ENCODE measurements at regions of chr2 and their contacts with region 1.

Region 1: DNA sequence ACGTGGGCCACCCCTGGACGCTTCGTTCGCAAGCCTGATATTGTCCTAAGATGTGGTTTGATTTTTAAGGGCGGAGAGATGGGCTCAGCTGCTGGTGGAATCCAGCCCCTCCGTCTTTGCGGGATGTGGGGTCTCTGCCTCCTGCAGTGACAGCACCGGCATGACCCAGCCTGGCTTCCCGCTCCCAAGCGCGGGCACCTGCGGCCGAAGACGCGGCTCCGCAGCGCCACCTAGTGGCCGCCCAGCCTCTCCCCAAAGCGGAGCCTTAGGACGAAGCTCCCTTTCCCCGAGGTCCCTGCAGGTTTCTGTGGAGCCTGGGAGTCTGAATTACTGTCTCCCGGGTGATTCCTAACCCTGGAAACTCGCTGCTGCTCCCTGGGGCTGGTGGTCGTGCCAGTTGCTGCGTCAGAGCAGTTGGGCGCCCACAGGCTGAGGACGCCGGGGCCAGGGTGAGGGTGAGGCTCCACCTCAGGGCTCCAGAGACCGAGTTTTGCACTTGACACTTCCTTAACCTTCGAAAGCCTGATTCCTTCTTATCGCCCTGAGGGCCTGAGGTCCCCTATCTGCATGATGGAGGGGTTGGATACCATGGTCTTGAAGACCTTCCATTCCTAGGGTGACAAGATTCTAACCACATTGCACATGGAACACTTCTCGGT is 137.5 kb downstream of the TPO start:
- DNase-seq: no peak
- ATAC-seq: peak; percentile 87
- H3K4me3 ChIP-seq: no peak overlapping the region
- H3K27ac ChIP-seq: peak overlapping the region; percentile 83
- H3K4me1 ChIP-seq: peaks cover 27% of the 10 kb centered on the region
- H3K27me3 ChIP-seq: no peaks in the 10 kb centered on the region
- CTCF ChIP-seq: peak; percentile 99

Region 2: DNA sequence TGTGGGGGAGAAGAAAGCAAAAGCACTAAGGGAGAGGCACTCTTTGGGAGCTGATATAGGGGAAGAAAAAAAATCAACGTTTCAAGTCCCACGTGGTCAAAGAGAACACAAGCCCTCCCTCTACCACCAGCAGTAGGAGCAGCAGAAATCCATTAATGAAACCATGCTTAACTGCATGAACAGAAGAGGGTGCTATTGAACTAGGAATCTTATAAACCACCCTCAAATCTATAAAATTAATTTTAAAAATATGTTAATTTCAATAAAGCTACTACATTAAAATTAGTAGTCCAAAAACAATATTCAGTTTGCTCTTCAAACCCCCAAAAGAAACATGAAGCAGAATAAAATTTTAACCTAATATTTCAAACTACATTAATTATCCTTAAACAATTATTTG is 1021.4 kb before region 1 on chr2:
- CTCF ChIA-PET with region 1: no interaction called
- POLR2A ChIA-PET with region 1: no interaction called
- in situ Hi-C with region 1: no loop called
- intact Hi-C with region 1: loop called (anchors 5 kb)
- DNase-seq: peak; percentile 5
- ATAC-seq: peak; percentile 78; the same call in 1 of the 2 replicates
- H3K4me3 ChIP-seq: no peak overlapping the region
- H3K27ac ChIP-seq: no peak overlapping the region
- H3K4me1 ChIP-seq: peaks cover 3% of the 10 kb centered on the region; the same call in 1 of the 2 replicates
- H3K27me3 ChIP-seq: no peaks in the 10 kb centered on the region
- CTCF ChIP-seq: peak; percentile 67

Region 3: GRCh38 chr2:1652034-1652790 is 101.4 kb after region 1 on chr2:
- CTCF ChIA-PET with region 1: no interaction called
- POLR2A ChIA-PET with region 1: interaction called, 18 read pairs
- in situ Hi-C with region 1: no loop called
- intact Hi-C with region 1: no loop called
- DNase-seq: no peak
- ATAC-seq: no peak
- H3K4me3 ChIP-seq: no peak overlapping the region
- H3K27ac ChIP-seq: peak overlapping the region; percentile 84
- H3K4me1 ChIP-seq: peaks cover 13% of the 10 kb centered on the region
- H3K27me3 ChIP-seq: no peaks in the 10 kb centered on the region
- CTCF ChIP-seq: no peak

Region 4: GRCh38 chr2:1750933-1751766 is 200.4 kb after region 1 on chr2:
- CTCF ChIA-PET with region 1: interaction called, 4 read pairs
- POLR2A ChIA-PET with region 1: no interaction called
- in situ Hi-C with region 1: no loop called
- intact Hi-C with region 1: loop called (anchors 5 kb)
- DNase-seq: no peak
- ATAC-seq: peak; percentile 90
- H3K4me3 ChIP-seq: no peak overlapping the region
- H3K27ac ChIP-seq: peak overlapping the region; percentile 90
- H3K4me1 ChIP-seq: peaks cover 16% of the 10 kb centered on the region
- H3K27me3 ChIP-seq: no peaks in the 10 kb centered on the region
- CTCF ChIP-seq: peak; percentile 91

Measured in Panc1 (cell line).